ENCODE measurements at regions of chr11 and their contacts with region 1.

Region 1: GRCh38 chr11:18012863-18013781 is at the start of gene SERGEF:
- DNase-seq: peak; percentile 77
- H3K4me3 ChIP-seq: peak within 1 kb of the TSS; percentile 59 to 85 (median 62)
- H3K27ac ChIP-seq: peak within 1 kb of the TSS; percentile 2
- H3K4me1 ChIP-seq: peaks cover 9% of the 10 kb centered on the region
- H3K27me3 ChIP-seq: peaks cover 9 to 16% of the 10 kb centered on the region in 2 experiments
- CTCF ChIP-seq: no peak
- POLR2A ChIP-seq: peak; percentile 78
- total RNA-seq, gene SERGEF: 12.3 and 16.7 TPM in 2 replicates

Region 2: GRCh38 chr11:17699147-17700114 is 313.7 kb before region 1 on chr11:
- CTCF ChIA-PET with region 1: no interaction called
- POLR2A ChIA-PET with region 1: no interaction called
- dilution Hi-C with region 1: no loop called
- intact Hi-C with region 1: no loop called
- DNase-seq: no peak
- H3K4me3 ChIP-seq: no peak overlapping the region
- H3K27ac ChIP-seq: no peak overlapping the region
- H3K4me1 ChIP-seq: no peaks in the 10 kb centered on the region
- H3K27me3 ChIP-seq: peaks cover 20 to 25% of the 10 kb centered on the region in 2 experiments
- CTCF ChIP-seq: no peak
- POLR2A ChIP-seq: no peak

Region 3: GRCh38 chr11:17821648-17822400 is 191.3 kb before region 1 on chr11:
- CTCF ChIA-PET with region 1: no interaction called
- POLR2A ChIA-PET with region 1: no interaction called
- dilution Hi-C with region 1: no loop called
- intact Hi-C with region 1: no loop called
- DNase-seq: peak; percentile 40
- H3K4me3 ChIP-seq: no peak overlapping the region
- H3K27ac ChIP-seq: no peak overlapping the region
- H3K4me1 ChIP-seq: no peaks in the 10 kb centered on the region
- H3K27me3 ChIP-seq: no peaks in the 10 kb centered on the region
- CTCF ChIP-seq: no peak
- POLR2A ChIP-seq: no peak

Region 4: GRCh38 chr11:17954395-17955252 is 58.5 kb before region 1 on chr11:
- CTCF ChIA-PET with region 1: no interaction called
- POLR2A ChIA-PET with region 1: no interaction called
- dilution Hi-C with region 1: no loop called
- intact Hi-C with region 1: no loop called
- DNase-seq: no peak
- H3K4me3 ChIP-seq: no peak overlapping the region
- H3K27ac ChIP-seq: no peak overlapping the region
- H3K4me1 ChIP-seq: no peaks in the 10 kb centered on the region
- H3K27me3 ChIP-seq: no peaks in the 10 kb centered on the region
- CTCF ChIP-seq: no peak
- POLR2A ChIP-seq: no peak

Region 5: GRCh38 chr11:18081551-18081950 is 68.4 kb after region 1 on chr11:
- CTCF ChIA-PET with region 1: no interaction called
- POLR2A ChIA-PET with region 1: no interaction called
- dilution Hi-C with region 1: no loop called
- intact Hi-C with region 1: loop called (anchors 2 kb)
- DNase-seq: peak; percentile 5
- H3K4me3 ChIP-seq: no peak overlapping the region
- H3K27ac ChIP-seq: no peak overlapping the region
- H3K4me1 ChIP-seq: peaks cover 18% of the 10 kb centered on the region
- H3K27me3 ChIP-seq: no peaks in the 10 kb centered on the region
- CTCF ChIP-seq: no peak
- POLR2A ChIP-seq: no peak

Region 6: GRCh38 chr11:18427240-18427639 is 414.1 kb after region 1 on chr11:
- CTCF ChIA-PET with region 1: no interaction called
- POLR2A ChIA-PET with region 1: no interaction called
- dilution Hi-C with region 1: no loop called
- intact Hi-C with region 1: no loop called
- DNase-seq: no peak
- H3K4me3 ChIP-seq: no peak overlapping the region
- H3K27ac ChIP-seq: no peak overlapping the region
- H3K4me1 ChIP-seq: no peaks in the 10 kb centered on the region
- H3K27me3 ChIP-seq: no peaks in the 10 kb centered on the region
- CTCF ChIP-seq: no peak
- POLR2A ChIP-seq: no peak

Measured in endothelial cell of umbilical vein (primary cell).